ENCODE measurements at regions of chr3 and their contacts with region 1.

Region 1: DNA sequence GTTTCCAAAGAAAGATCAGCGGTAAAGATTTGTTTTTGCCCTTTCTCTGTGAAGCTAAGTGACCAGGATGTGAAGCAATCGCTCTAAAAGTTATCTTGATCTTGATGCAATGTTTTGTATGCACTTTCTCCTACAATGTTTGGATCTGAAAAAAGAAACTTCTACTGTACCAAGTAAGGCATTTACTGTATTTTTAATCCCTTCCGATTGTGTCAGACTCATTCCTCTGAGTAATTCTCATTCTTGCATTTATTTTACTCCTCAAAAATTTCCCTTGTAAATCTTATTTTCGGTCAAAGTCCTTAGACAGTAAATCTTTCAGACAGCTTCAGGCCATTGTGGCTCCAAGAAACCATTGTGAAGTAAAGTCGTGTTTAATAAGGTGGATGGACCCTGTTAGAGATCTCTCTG is 141.9 kb downstream of the TP63 start:
- DNase-seq: peak; percentile 72
- ATAC-seq: peak; percentile 87
- H3K4me3 ChIP-seq: peak overlapping the region; percentile 19; the same call in 1 of the 2 replicates
- H3K27ac ChIP-seq: peak overlapping the region; percentile 54; the same call in 1 of the 2 replicates
- H3K4me1 ChIP-seq: peaks cover 2% of the 10 kb centered on the region
- H3K27me3 ChIP-seq: no peaks in the 10 kb centered on the region; the same call in 1 of the 2 replicates
- CTCF ChIP-seq: no peak
- POLR2A ChIP-seq: no peak
- RAD21 ChIP-seq: no peak

Region 2: DNA sequence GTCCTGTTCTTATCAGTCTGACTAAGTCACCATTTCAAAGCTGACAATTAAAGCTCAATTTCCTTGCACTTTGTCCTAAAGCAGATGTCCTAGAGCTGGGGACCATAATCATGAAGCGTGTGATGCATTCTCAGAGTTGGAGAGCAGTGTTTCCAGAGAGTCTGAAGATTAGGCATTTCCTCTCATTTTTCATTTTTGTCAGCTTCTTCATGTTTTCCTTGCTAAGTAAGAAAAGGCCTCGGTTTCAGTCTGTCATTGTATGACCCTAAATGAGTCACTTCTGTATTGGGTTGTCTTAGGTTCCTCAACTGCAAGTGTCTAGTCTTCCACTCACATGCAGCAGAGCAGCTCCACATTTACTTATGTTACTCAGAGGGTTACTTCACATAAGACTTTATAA is 858.5 kb before region 1 on chr3:
- CTCF ChIA-PET with region 1: no interaction called
- POLR2A ChIA-PET with region 1: no interaction called
- dilution Hi-C with region 1: no loop called
- in situ Hi-C with region 1: no loop called
- intact Hi-C with region 1: no loop called
- DNase-seq: peak; percentile 89
- ATAC-seq: peak; percentile 69
- H3K4me3 ChIP-seq: no peak overlapping the region
- H3K27ac ChIP-seq: no peak overlapping the region
- H3K4me1 ChIP-seq: peaks cover 9% of the 10 kb centered on the region
- H3K27me3 ChIP-seq: no peaks in the 10 kb centered on the region
- CTCF ChIP-seq: no peak
- POLR2A ChIP-seq: no peak
- RAD21 ChIP-seq: no peak

Region 3: DNA sequence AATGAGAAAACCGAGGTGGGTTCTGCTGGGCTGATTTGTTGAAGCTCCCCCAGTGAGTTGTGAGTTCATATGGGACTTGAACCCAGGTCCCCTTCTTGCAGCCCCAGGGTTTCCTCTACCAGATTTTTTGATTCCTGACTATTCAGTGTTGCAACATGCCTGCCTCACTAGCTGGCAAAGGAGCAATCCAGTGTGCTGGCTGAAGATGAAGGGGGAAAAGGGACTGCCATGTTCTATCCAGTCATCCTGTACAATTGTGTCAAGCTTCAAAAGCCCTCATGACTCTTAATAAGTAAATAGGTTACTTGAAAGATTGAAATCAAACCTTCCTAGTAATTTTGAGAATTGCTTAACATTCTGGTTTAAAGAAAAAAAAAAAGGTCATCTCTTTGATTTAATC is 353.4 kb before region 1 on chr3:
- CTCF ChIA-PET with region 1: no interaction called
- POLR2A ChIA-PET with region 1: no interaction called
- dilution Hi-C with region 1: no loop called
- in situ Hi-C with region 1: no loop called
- intact Hi-C with region 1: no loop called
- DNase-seq: no peak
- ATAC-seq: no peak
- H3K4me3 ChIP-seq: no peak overlapping the region
- H3K27ac ChIP-seq: no peak overlapping the region
- H3K4me1 ChIP-seq: no peaks in the 10 kb centered on the region
- H3K27me3 ChIP-seq: no peaks in the 10 kb centered on the region
- CTCF ChIP-seq: no peak
- POLR2A ChIP-seq: no peak
- RAD21 ChIP-seq: no peak

Region 4: DNA sequence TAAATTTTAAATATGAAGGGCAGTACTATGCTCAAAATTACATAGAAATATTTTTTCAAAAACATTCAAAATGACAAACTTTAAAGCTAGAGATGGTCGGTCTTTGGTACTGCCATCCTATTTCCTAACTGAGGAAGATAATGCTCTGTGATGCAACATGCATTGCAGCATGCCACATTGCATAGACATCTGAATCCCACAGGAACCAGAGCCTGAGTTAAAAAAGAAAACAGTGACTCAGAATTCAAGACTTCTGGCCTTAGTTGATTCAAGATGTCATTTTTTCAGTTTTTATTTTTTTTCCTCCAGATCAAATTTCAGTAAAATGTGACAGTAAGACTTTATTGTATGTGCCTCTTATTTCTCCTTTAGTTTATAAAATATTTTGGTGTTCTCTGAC is 108.7 kb before region 1 on chr3:
- CTCF ChIA-PET with region 1: no interaction called
- POLR2A ChIA-PET with region 1: no interaction called
- dilution Hi-C with region 1: no loop called
- in situ Hi-C with region 1: no loop called
- intact Hi-C with region 1: loop called (anchors 10 kb)
- DNase-seq: peak; percentile 96
- ATAC-seq: peak; percentile 96
- H3K4me3 ChIP-seq: no peak overlapping the region
- H3K27ac ChIP-seq: no peak overlapping the region
- H3K4me1 ChIP-seq: no peaks in the 10 kb centered on the region
- H3K27me3 ChIP-seq: no peaks in the 10 kb centered on the region
- CTCF ChIP-seq: no peak
- POLR2A ChIP-seq: no peak
- RAD21 ChIP-seq: no peak

Region 5: GRCh38 chr3:189841473-189842210 is 68.6 kb after region 1 on chr3:
- CTCF ChIA-PET with region 1: no interaction called
- POLR2A ChIA-PET with region 1: no interaction called
- dilution Hi-C with region 1: no loop called
- in situ Hi-C with region 1: no loop called
- intact Hi-C with region 1: no loop called
- DNase-seq: peak; percentile 64
- ATAC-seq: no peak
- H3K4me3 ChIP-seq: no peak overlapping the region
- H3K27ac ChIP-seq: no peak overlapping the region
- H3K4me1 ChIP-seq: 0 out of 2 replicates have a peak, but pooled peaks cover 1% of the 10 kb centered on the region
- H3K27me3 ChIP-seq: no peaks in the 10 kb centered on the region; the same call in 1 of the 2 replicates
- CTCF ChIP-seq: no peak
- POLR2A ChIP-seq: no peak
- RAD21 ChIP-seq: no peak

Region 6: GRCh38 chr3:189853906-189854305 is 80.9 kb after region 1 on chr3:
- CTCF ChIA-PET with region 1: no interaction called
- POLR2A ChIA-PET with region 1: no interaction called
- dilution Hi-C with region 1: no loop called
- in situ Hi-C with region 1: no loop called
- intact Hi-C with region 1: no loop called
- DNase-seq: no peak
- ATAC-seq: no peak
- H3K4me3 ChIP-seq: no peak overlapping the region
- H3K27ac ChIP-seq: no peak overlapping the region
- H3K4me1 ChIP-seq: no peaks in the 10 kb centered on the region
- H3K27me3 ChIP-seq: no peaks in the 10 kb centered on the region
- CTCF ChIP-seq: no peak
- POLR2A ChIP-seq: no peak
- RAD21 ChIP-seq: no peak